Dorsolateral prefrontal cortex (tissue), 120 donors: ENCODE measurements at regions of chr3 and their contacts with region 1.

Region 1: GRCh38 chr3:18424729-18425640 is at the start of gene SATB1:
- DNase-seq: peak; percentile 58 to 85 (median 72)
- H3K4me3 ChIP-seq: peak within 1 kb of the TSS; percentile 60 to 95 (median 85)
- H3K27ac ChIP-seq: peak within 1 kb of the TSS; percentile 65 to 98 (median 92)
- H3K27me3 ChIP-seq: no peaks in the 10 kb centered on the region
- CTCF ChIP-seq: peak in 3 of 56 donors; percentile 11 to 16 (median 12)
- total RNA-seq, gene SATB1: 71.8 to 197 (median 132) TPM

Region 2: DNA sequence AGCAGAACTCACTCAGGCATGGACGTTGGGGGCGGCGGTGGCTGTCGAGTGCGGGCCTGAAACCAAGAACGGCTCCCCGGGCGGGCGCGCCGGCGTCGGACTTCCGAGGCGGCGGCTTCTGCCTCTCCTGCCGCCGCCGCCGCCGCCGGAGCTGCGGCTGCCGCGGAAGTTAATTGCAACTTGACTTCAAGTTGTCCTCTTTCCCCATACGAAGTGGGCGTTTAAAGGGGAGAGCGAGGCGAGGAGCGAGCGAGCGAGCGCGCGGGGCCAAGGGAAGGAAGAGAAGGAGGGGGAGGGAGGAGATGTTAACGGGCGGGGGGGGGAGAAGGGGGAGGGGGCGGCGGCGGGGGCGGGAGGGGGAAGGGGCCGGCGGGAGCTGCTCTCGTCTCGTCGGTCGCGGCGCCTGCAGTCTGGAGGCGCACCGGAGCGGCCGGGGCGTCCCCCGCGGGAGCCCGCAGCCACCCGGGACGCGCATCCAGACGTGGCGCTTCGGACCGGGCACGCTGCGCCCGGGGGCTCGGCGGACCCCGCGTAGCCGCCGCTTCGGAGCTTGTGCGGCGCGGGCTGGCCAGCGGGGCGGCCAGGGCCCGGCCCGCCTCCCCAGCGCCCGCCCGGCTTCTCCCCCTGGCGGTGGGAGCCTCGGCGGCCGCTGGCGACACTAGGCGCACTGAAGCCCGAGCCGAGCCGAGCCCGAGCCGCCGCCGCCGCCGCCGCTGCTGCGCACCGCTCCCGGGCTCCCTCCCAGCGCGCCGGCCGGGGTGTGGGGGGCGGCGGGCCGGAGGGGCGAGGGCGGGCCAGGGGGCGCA is 19.8 kb after region 1 on chr3:
- intact Hi-C with region 1: loop called (anchors 1 to 2 kb)
- DNase-seq: peak in 6 of 10 donors; percentile 36 to 63 (median 43)
- H3K4me3 ChIP-seq: peak overlapping the region; percentile 47 to 77 (median 64)
- H3K27ac ChIP-seq: peak overlapping the region in 41 of 59 donors; percentile 3 to 80 (median 57)
- H3K27me3 ChIP-seq: peaks cover 0 to 10% (median 0%) of the 10 kb centered on the region in 45 donors
- CTCF ChIP-seq: peak in 16 of 56 donors; percentile 6 to 59 (median 30)